Naive thymus-derived CD4-positive, alpha-beta T cell (primary cell): ENCODE measurements at regions of chr5 and their contacts with region 1.

Region 1: GRCh38 chr5:139287890-139288635 is 5.5 kb upstream of the MATR3 start:
- DNase-seq: peak in 4 of 9 donors; percentile 21 to 38 (median 34)
- ATAC-seq: peak; percentile 57
- H3K4me3 ChIP-seq: no peak overlapping the region
- H3K4me3 Mint-ChIP-seq: no peak overlapping the region
- H3K27ac ChIP-seq: no peak overlapping the region
- H3K27ac Mint-ChIP-seq: peak overlapping the region in 2 of 9 donors; percentile 0 to 7
- H3K4me1 ChIP-seq: peaks cover 0 to 3% of the 10 kb centered on the region in 2 donors
- H3K4me1 Mint-ChIP-seq: peaks cover 0 to 20% (median 5%) of the 10 kb centered on the region in 7 donors
- H3K27me3 ChIP-seq: no peaks in the 10 kb centered on the region
- H3K27me3 Mint-ChIP-seq: no peaks in the 10 kb centered on the region

Region 2: DNA sequence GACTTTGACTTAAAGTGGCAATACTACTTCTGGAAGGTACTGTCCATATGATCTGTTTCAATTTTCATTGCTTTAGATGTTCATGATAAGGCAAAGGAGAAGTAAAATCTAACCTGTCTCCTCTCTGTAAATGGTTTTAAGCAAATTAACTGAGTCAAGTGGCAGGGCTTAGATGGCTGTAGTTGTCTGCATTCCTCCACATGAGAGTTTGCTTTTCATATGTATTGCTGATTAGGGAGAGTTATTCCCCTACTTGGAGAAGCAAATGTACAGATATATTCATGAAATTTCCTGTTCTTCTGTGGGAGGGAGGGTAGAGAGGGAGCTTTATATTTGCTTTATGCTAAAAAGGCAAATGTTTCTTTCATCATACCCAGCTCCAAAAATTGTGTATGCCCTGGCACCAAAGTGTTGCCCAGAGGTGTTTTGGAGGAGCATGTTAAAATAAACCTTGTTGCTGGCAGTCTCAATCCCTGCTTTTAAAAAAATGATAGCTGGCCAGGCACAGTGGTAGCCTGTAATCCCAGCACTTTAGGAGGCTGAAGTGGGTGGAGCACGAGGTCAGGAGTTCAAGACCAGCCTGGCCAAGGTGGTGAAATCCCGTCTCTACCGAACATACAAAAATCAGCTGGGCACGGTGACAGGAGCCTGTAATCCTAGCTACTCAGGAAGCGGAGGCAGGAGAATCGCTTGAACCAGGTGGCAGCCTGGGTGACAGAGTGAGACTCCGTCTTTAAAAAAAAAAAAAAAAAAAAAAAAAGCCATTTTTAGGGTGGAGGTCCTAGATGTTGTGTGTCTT is 409.4 kb before region 1 on chr5:
- CTCF ChIA-PET with region 1: no interaction called
- POLR2A ChIA-PET with region 1: no interaction called
- intact Hi-C with region 1: no loop called
- DNase-seq: no peak
- ATAC-seq: no peak
- H3K4me3 ChIP-seq: no peak overlapping the region
- H3K4me3 Mint-ChIP-seq: no peak overlapping the region
- H3K27ac ChIP-seq: no peak overlapping the region
- H3K27ac Mint-ChIP-seq: no peak overlapping the region
- H3K4me1 ChIP-seq: no peaks in the 10 kb centered on the region
- H3K4me1 Mint-ChIP-seq: no peaks in the 10 kb centered on the region
- H3K27me3 ChIP-seq: no peaks in the 10 kb centered on the region
- H3K27me3 Mint-ChIP-seq: peaks cover 12 to 33% (median 29%) of the 10 kb centered on the region in 5 donors

Region 3: GRCh38 chr5:139251281-139251687 is 36.8 kb before region 1 on chr5:
- CTCF ChIA-PET with region 1: no interaction called
- POLR2A ChIA-PET with region 1: no interaction called
- intact Hi-C with region 1: no loop called
- DNase-seq: peak in 1 of 9 donors; percentile 37
- ATAC-seq: peak; percentile 41
- H3K4me3 ChIP-seq: no peak overlapping the region
- H3K4me3 Mint-ChIP-seq: no peak overlapping the region
- H3K27ac ChIP-seq: no peak overlapping the region
- H3K27ac Mint-ChIP-seq: no peak overlapping the region
- H3K4me1 ChIP-seq: no peaks in the 10 kb centered on the region
- H3K4me1 Mint-ChIP-seq: peaks cover 5 to 19% (median 9%) of the 10 kb centered on the region in 7 donors
- H3K27me3 ChIP-seq: no peaks in the 10 kb centered on the region
- H3K27me3 Mint-ChIP-seq: peaks cover 0 to 4% (median 0%) of the 10 kb centered on the region in 5 donors

Region 4: DNA sequence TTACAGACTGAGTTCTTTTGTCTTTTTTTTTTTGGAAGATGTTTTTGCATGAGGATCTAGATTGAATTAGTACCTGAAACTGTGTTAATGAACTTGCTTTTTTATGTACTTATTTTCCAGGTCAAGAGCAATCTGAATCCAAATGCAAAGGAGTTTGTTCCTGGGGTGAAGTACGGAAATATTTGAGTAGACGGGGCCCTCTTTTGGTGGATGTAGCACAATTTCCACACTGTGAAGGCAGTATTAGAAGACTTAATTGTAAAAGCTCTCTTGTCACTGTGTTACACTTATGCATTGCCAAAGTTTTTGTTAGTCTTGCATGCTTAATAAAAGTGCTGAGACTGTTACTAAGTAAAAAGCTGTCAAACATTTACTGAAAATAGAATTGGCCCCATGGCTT is 80.5 kb after region 1 on chr5:
- CTCF ChIA-PET with region 1: no interaction called
- POLR2A ChIA-PET with region 1: no interaction called
- intact Hi-C with region 1: loop called in 1 of 2 experiments (anchors 1 kb)
- DNase-seq: no peak
- ATAC-seq: no peak
- H3K4me3 ChIP-seq: no peak overlapping the region
- H3K4me3 Mint-ChIP-seq: no peak overlapping the region
- H3K27ac ChIP-seq: no peak overlapping the region
- H3K27ac Mint-ChIP-seq: peak overlapping the region in 3 of 9 donors; percentile 5 to 63 (median 14)
- H3K4me1 ChIP-seq: no peaks in the 10 kb centered on the region
- H3K4me1 Mint-ChIP-seq: peaks cover 0 to 15% (median 0%) of the 10 kb centered on the region in 7 donors
- H3K27me3 ChIP-seq: no peaks in the 10 kb centered on the region
- H3K27me3 Mint-ChIP-seq: no peaks in the 10 kb centered on the region

Region 5: GRCh38 chr5:139690064-139690802 is 402.2 kb after region 1 on chr5:
- CTCF ChIA-PET with region 1: no interaction called
- POLR2A ChIA-PET with region 1: no interaction called
- intact Hi-C with region 1: loop called in 1 of 2 experiments (anchors 5 kb)
- DNase-seq: peak in 2 of 9 donors; percentile 26 to 27
- ATAC-seq: peak; percentile 59
- H3K4me3 ChIP-seq: no peak overlapping the region
- H3K4me3 Mint-ChIP-seq: no peak overlapping the region
- H3K27ac ChIP-seq: no peak overlapping the region
- H3K27ac Mint-ChIP-seq: no peak overlapping the region
- H3K4me1 ChIP-seq: no peaks in the 10 kb centered on the region
- H3K4me1 Mint-ChIP-seq: peaks cover 3 to 17% (median 6%) of the 10 kb centered on the region in 7 donors
- H3K27me3 ChIP-seq: no peaks in the 10 kb centered on the region
- H3K27me3 Mint-ChIP-seq: peaks cover 0 to 17% (median 0%) of the 10 kb centered on the region in 5 donors